Endothelial cell of umbilical vein (primary cell): ENCODE measurements at regions of chr16 and their contacts with region 1.

Region 1: DNA sequence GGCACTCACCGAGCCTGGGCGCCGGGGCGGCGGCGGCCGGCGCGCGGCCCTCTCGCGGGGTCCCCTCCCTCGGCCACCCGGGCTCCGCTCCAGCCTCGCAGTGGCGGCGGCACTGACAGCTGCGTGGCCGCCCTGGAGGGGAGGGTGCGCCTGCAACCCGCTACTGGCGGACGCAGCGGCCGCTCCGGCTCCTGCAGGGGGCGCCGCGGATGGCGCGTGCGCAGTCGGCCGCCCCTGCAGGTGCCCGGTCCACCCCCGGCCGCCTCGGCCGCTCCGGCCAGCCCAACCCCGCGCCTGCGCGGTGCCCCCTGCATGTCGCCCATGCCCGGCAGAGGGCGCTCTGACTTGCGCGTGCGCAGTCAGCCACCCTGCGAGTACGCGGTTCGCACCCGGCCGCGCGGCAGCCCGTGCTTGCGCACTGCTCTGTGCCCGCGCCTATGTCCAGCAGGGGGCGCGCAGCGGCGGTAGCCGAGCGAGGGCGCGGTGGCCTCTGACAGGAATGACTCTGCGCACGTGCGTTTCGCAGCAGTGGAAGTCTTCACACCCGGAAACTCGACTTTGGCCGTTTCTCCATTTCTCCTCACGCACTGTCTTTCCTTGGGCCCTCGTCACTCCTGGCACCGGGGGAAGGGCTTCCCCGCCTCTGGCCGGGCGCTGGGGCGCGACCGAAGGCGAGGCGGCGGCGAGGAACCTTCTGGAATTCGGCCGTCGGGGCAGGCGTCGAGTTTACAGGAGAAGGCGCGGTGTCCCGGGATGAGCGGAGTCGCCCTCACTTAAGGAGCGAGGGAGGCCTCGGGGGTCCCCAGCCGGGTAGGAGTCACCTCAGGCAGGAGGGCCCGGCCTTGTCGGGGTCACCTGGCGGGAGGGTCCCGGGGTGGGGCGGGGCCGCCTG is at the start of gene ABCA3:
- DNase-seq: peak; percentile 98
- H3K4me3 ChIP-seq: peak within 1 kb of the TSS; percentile 57 to 79 (median 60)
- H3K27ac ChIP-seq: peak within 1 kb of the TSS; percentile 29
- H3K4me1 ChIP-seq: peaks cover 9% of the 10 kb centered on the region
- H3K27me3 ChIP-seq: peaks cover 7 to 28% of the 10 kb centered on the region in 2 experiments
- CTCF ChIP-seq: peak; percentile 98 to 100
- POLR2A ChIP-seq: peak; percentile 70
- total RNA-seq, gene ABCA3: 25.5 and 36.0 TPM in 2 replicates

Region 2: GRCh38 chr16:2267913-2268666 is 72.7 kb before region 1 on chr16 and contains the start of gene RNPS1:
- CTCF ChIA-PET with region 1: no interaction called
- POLR2A ChIA-PET with region 1: no interaction called
- dilution Hi-C with region 1: no loop called
- intact Hi-C with region 1: loop called (anchors 2 kb)
- DNase-seq: peak; percentile 96
- H3K4me3 ChIP-seq: peak within 1 kb of the TSS; percentile 16 to 73 (median 44)
- H3K27ac ChIP-seq: peak within 1 kb of the TSS; percentile 78
- H3K4me1 ChIP-seq: peaks cover 9% of the 10 kb centered on the region
- H3K27me3 ChIP-seq: no peaks in the 10 kb centered on the region
- CTCF ChIP-seq: no peak
- POLR2A ChIP-seq: peak; percentile 85
- total RNA-seq, gene RNPS1: 204 and 209 TPM in 2 replicates

Region 3: DNA sequence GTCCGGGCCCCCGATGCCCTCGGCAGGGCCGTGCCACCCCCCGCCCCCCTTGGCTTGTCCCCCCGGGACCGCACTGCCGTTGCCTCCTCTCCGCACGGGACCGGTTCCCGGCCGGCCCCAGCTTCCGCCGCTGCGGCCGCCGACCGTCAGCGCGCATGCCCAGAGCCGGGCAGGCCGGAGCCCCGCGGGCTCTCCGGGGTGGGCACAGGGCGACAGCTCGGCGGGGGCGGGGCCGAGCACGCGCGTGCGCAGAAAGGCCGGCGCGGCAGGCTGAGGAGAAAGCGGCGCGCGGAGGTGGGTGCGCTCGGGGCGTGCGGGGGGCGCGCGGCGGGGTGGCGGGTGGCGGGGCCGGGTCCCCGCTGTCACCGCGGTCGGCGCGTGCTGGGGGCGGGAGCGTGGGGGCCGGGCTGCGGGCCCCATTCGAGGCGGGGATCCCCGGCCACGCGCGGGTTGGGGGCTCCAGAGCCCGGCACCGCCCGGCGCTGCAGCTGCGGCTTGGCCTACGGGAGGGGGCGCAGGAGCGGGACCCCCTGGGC is 134.1 kb after region 1 on chr16 and contains the start of gene TBC1D24:
- CTCF ChIA-PET with region 1: no interaction called
- POLR2A ChIA-PET with region 1: no interaction called
- dilution Hi-C with region 1: no loop called
- intact Hi-C with region 1: loop called (anchors 1 kb)
- DNase-seq: peak; percentile 82
- H3K4me3 ChIP-seq: peak within 1 kb of the TSS; percentile 33 to 72 (median 69)
- H3K27ac ChIP-seq: peak within 1 kb of the TSS; percentile 8
- H3K4me1 ChIP-seq: peaks cover 10% of the 10 kb centered on the region
- H3K27me3 ChIP-seq: peaks cover 11 to 19% of the 10 kb centered on the region in 2 experiments
- CTCF ChIP-seq: no peak
- POLR2A ChIP-seq: peak; percentile 92
- total RNA-seq, gene TBC1D24: 17.3 and 22.8 TPM in 2 replicates

Region 4: DNA sequence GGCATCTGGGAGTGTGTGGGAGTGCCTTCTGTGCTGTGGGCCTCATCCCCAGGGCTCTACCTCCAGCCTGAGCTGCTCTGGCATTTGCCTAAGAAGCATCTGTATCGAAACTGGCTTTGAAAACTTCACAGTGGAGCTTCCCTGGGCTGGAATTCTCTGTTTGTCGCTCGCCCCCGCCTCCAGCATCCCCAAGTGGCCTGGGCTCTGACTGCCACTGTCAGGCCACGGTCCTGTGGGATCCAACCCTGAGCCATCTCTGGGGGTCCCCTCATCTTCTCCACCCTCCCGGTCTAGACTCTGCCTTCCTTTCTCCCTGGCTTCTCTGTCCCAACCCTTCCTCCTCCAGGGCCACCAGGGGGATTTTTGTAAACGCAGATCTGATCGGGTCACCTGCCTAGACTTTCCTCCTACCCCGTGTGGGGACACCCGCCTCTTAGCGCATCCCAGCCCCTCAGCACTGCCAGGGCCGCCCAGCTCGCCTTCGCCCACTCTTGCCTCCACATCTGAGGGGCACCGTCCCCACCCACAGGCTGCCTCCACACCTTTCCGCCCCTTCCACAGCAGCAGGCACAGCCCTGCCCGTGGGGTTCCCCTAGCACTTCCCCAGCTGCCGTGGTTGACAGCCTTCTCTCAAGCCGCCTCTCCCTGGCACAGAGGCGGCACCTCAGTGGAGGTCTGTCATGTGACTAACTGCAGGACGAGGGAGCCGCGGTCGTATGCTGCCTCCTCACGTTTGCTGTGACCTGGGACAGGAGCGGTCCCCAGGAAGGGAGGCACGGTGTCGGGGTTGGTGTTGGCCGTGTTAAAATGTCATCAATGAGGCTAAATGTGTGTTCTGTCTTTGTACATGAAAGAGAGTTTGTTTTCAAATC is 146.1 kb after region 1 on chr16:
- CTCF ChIA-PET with region 1: no interaction called
- POLR2A ChIA-PET with region 1: no interaction called
- dilution Hi-C with region 1: no loop called
- intact Hi-C with region 1: no loop called
- DNase-seq: no peak
- H3K4me3 ChIP-seq: no peak overlapping the region
- H3K27ac ChIP-seq: no peak overlapping the region
- H3K4me1 ChIP-seq: no peaks in the 10 kb centered on the region
- H3K27me3 ChIP-seq: no peaks in the 10 kb centered on the region
- CTCF ChIP-seq: no peak
- POLR2A ChIP-seq: no peak

Region 5: DNA sequence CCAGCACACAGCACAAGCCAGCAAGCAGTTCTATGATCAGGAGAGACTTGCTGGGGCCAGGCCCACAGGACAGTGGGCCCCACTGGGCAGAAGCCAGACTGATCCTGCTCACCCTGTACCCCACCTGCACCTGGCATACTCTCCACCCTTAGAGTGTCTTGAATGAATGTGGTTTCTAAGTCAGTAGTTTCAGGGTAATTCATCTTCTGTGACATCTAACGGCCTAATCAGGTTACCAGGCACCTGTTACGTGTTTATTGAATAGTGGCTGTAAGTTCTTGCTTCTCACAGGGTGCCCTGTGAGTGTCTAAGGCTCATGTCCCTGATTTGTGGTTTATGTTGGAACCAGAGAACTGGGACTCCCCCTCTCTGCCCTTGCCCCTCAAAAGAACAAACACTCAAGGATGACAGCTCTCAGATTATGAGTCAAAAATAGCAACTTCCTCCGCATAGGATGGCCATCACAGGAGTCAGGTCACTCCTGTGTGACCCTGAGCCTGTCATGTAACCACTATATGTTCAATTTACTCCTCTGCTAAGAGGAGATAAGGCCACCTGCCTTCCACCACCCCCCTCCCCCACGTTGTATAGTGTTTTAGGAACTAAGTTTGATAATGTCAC is 1007.8 kb after region 1 on chr16:
- CTCF ChIA-PET with region 1: no interaction called
- POLR2A ChIA-PET with region 1: no interaction called
- dilution Hi-C with region 1: no loop called
- intact Hi-C with region 1: no loop called
- DNase-seq: no peak
- H3K4me3 ChIP-seq: no peak overlapping the region
- H3K27ac ChIP-seq: no peak overlapping the region
- H3K4me1 ChIP-seq: no peaks in the 10 kb centered on the region
- H3K27me3 ChIP-seq: peaks cover 0 to 3% of the 10 kb centered on the region in 2 experiments
- CTCF ChIP-seq: no peak
- POLR2A ChIP-seq: no peak

Region 6: GRCh38 chr16:3774156-3774767 is 1433.5 kb after region 1 on chr16:
- CTCF ChIA-PET with region 1: no interaction called
- POLR2A ChIA-PET with region 1: no interaction called
- dilution Hi-C with region 1: no loop called
- intact Hi-C with region 1: no loop called
- DNase-seq: no peak
- H3K4me3 ChIP-seq: no peak overlapping the region
- H3K27ac ChIP-seq: no peak overlapping the region
- H3K4me1 ChIP-seq: no peaks in the 10 kb centered on the region
- H3K27me3 ChIP-seq: no peaks in the 10 kb centered on the region
- CTCF ChIP-seq: no peak
- POLR2A ChIP-seq: no peak